ENCODE measurements at regions of chr10 and their contacts with region 1.

Region 1: GRCh38 chr10:43249962-43250614 is 16.8 kb downstream of the RASGEF1A start:
- DNase-seq: peak; percentile 62
- H3K4me3 Mint-ChIP-seq: no peak overlapping the region
- H3K27ac Mint-ChIP-seq: no peak overlapping the region
- H3K4me1 Mint-ChIP-seq: peaks cover 13% of the 10 kb centered on the region
- H3K27me3 Mint-ChIP-seq: no peaks in the 10 kb centered on the region

Region 2: DNA sequence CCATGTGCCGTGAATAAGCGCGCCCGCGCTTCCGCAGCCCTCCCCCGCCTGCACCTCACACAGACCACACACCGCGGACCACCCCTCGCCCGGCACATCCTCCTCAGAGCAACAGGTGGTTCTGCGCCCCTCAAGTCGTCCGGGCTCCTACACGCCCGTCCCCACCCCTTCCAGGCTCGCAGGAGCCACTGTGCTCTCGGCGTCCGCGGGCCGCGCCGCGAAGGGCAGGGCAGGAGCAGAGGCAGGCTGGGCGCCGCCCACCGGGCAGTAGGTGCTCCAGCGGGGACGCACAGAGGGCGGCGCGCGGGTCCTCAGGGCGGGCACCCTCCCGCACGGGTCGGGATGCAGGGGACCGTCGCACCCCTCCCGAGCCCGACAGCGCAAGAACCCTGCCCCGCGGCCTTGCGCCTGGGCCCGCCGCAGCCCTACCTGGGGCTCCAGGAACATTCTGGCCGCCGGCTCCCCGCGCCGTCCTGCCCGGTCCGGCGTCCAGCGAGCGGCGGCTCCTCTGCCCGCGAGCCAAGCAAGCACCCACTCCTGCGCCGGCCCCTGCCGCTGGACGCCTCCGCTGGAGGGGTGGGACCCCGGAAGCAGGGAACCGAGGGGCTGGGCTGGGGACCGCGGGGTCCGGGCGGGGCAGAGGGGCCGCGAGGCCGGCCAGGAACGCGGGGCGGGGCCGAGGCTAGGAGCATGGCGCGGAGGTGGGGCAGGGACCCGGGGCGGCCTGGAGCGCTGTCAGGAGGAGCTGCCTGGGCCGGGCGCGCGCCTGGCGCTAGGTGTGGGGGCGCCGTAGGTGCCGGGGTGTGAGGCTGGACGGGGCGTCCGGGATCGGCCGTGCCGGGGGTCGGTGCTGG is 20.7 kb before region 1 on chr10:
- CTCF ChIA-PET with region 1: no interaction called
- POLR2A ChIA-PET with region 1: interaction called, 3 read pairs
- intact Hi-C with region 1: loop called (anchors 2 kb)
- DNase-seq: peak; percentile 46
- H3K4me3 Mint-ChIP-seq: peak overlapping the region; percentile 69
- H3K27ac Mint-ChIP-seq: no peak overlapping the region
- H3K4me1 Mint-ChIP-seq: peaks cover 35% of the 10 kb centered on the region
- H3K27me3 Mint-ChIP-seq: peaks cover 11% of the 10 kb centered on the region